Panc1 (cell line): ENCODE measurements at regions of chr3 and their contacts with region 1.

Region 1: GRCh38 chr3:164222197-164222596 is 856.1 kb downstream of the SI start:
- DNase-seq: no peak
- ATAC-seq: no peak
- H3K4me3 ChIP-seq: no peak overlapping the region
- H3K27ac ChIP-seq: no peak overlapping the region
- H3K4me1 ChIP-seq: no peaks in the 10 kb centered on the region
- H3K27me3 ChIP-seq: no peaks in the 10 kb centered on the region
- CTCF ChIP-seq: no peak

Region 2: DNA sequence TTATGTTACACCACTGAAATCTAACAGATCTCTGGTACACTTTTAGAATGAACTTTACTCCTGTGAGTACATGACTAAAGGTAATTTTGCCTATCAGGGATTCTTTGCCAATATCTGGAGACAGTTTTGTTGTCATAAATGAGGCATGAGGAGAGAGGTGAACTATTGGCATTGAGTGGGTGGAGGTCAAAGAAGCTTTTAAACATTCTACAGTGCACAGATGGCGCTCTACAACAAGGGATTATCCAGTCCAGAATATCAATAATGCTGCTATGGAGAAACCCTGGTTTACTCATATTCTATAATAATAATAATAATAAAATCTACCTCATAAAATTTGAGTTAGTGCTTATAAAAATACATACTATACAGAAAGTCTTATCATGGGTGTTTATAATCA is 153.8 kb after region 1 on chr3:
- CTCF ChIA-PET with region 1: no interaction called
- POLR2A ChIA-PET with region 1: interaction called, 16 read pairs
- in situ Hi-C with region 1: no loop called
- intact Hi-C with region 1: no loop called
- DNase-seq: no peak
- ATAC-seq: no peak
- H3K4me3 ChIP-seq: no peak overlapping the region
- H3K27ac ChIP-seq: no peak overlapping the region
- H3K4me1 ChIP-seq: no peaks in the 10 kb centered on the region
- H3K27me3 ChIP-seq: no peaks in the 10 kb centered on the region
- CTCF ChIP-seq: no peak